ENCODE measurements at regions of chr19 and their contacts with region 1.

Region 1: GRCh38 chr19:41363753-41364523 is at the start of gene B9D2:
- DNase-seq: peak; percentile 96
- ATAC-seq: peak; percentile 95
- H3K4me3 ChIP-seq: peak within 1 kb of the TSS; percentile 70 to 87 (median 84)
- H3K27ac ChIP-seq: peak within 1 kb of the TSS; percentile 95
- H3K4me1 ChIP-seq: peaks cover 50% of the 10 kb centered on the region
- H3K27me3 ChIP-seq: no peaks in the 10 kb centered on the region; a peak in 2 of 5 replicates
- CTCF ChIP-seq: no peak
- EP300 ChIP-seq: peak in 1 of 2 experiments; percentile 42; a peak in 1 of 4 replicates
- POLR2A ChIP-seq: peak; percentile 65 to 91; a peak in 3 of 4 replicates
- RAD21 ChIP-seq: no peak
- total RNA-seq, gene B9D2: 4.4 and 5.3 TPM in 2 replicates

Region 2: GRCh38 chr19:41226053-41226873 is 137.7 kb before region 1 on chr19:
- CTCF ChIA-PET with region 1: no interaction called
- POLR2A ChIA-PET with region 1: interaction called, 10 read pairs
- in situ Hi-C with region 1: no loop called
- intact Hi-C with region 1: no loop called
- DNase-seq: peak; percentile 68
- ATAC-seq: peak; percentile 78
- H3K4me3 ChIP-seq: peak overlapping the region; percentile 63 to 80 (median 73)
- H3K27ac ChIP-seq: peak overlapping the region; percentile 77
- H3K4me1 ChIP-seq: peaks cover 69% of the 10 kb centered on the region
- H3K27me3 ChIP-seq: no peaks in the 10 kb centered on the region; a peak in 1 of 5 replicates
- CTCF ChIP-seq: no peak
- EP300 ChIP-seq: no peak; a peak in 1 of 4 replicates
- POLR2A ChIP-seq: peak; percentile 46 to 77; a peak in 3 of 4 replicates
- RAD21 ChIP-seq: no peak; the same call in none of the 2 replicates

Region 3: DNA sequence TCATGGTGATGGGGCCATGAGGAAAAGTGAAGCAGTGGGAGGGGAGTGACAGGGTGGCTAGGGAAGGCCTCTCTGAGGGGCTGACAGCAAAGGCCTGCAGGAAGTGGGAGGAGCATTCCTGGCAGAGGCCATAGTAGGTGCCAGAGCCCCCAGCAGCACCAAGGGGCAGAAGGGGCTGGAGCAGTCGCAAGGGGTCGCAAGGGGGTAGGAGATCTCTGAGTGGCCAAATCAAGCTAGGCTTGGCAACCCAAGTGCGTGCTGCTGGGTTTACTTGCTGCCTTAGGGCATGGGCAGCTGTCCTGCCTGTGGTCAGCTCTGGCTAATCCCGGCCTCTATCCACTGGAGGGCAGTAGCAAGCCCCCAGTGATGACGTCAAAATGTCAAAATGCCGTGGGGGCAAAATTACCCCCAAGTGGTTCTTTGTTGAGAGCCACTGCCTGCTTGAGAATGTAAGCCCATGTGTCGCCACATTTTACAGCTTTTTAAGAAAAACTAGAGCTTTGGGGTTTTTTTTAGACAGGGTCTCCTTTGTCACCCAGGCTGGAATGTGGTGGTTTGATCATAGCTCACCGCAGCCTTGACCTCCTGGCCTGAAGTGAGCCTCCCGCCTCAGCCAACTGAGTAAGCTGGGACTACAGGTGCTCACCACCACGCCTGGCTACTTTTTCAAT is 42.2 kb before region 1 on chr19:
- CTCF ChIA-PET with region 1: no interaction called
- POLR2A ChIA-PET with region 1: interaction called, 24 read pairs
- in situ Hi-C with region 1: no loop called
- intact Hi-C with region 1: no loop called
- DNase-seq: peak; percentile 82
- ATAC-seq: peak; percentile 33
- H3K4me3 ChIP-seq: no peak overlapping the region
- H3K27ac ChIP-seq: peak overlapping the region; percentile 74
- H3K4me1 ChIP-seq: peaks cover 71% of the 10 kb centered on the region
- H3K27me3 ChIP-seq: no peaks in the 10 kb centered on the region
- CTCF ChIP-seq: peak; percentile 80
- EP300 ChIP-seq: peak; percentile 56 to 63; a peak in 3 of 4 replicates
- POLR2A ChIP-seq: no peak
- RAD21 ChIP-seq: peak; percentile 63; the same call in 1 of the 2 replicates

Region 4: GRCh38 chr19:41341669-41342490 is 22.1 kb before region 1 on chr19:
- CTCF ChIA-PET with region 1: no interaction called
- POLR2A ChIA-PET with region 1: no interaction called
- in situ Hi-C with region 1: no loop called
- intact Hi-C with region 1: no loop called
- DNase-seq: no peak
- ATAC-seq: no peak; the same call in 1 of the 3 replicates
- H3K4me3 ChIP-seq: no peak overlapping the region
- H3K27ac ChIP-seq: no peak overlapping the region
- H3K4me1 ChIP-seq: no peaks in the 10 kb centered on the region
- H3K27me3 ChIP-seq: no peaks in the 10 kb centered on the region
- CTCF ChIP-seq: peak; percentile 41
- EP300 ChIP-seq: no peak
- POLR2A ChIP-seq: no peak
- RAD21 ChIP-seq: no peak

Region 5: GRCh38 chr19:41376241-41376997 is 12.5 kb after region 1 on chr19 and contains the start of gene TMEM91:
- CTCF ChIA-PET with region 1: no interaction called
- POLR2A ChIA-PET with region 1: interaction called, 11 read pairs
- in situ Hi-C with region 1: no loop called
- intact Hi-C with region 1: no loop called
- DNase-seq: no peak
- ATAC-seq: peak; percentile 78
- H3K4me3 ChIP-seq: peak within 1 kb of the TSS; percentile 65 to 81 (median 74)
- H3K27ac ChIP-seq: peak within 1 kb of the TSS; percentile 50
- H3K4me1 ChIP-seq: peaks cover 26% of the 10 kb centered on the region
- H3K27me3 ChIP-seq: no peaks in the 10 kb centered on the region
- CTCF ChIP-seq: no peak
- EP300 ChIP-seq: no peak
- POLR2A ChIP-seq: 0 out of 4 replicates have a peak, but pooled peaks of 1 of the 2 experiments have one; percentile 55
- RAD21 ChIP-seq: no peak
- total RNA-seq, gene TMEM91: 6.3 and 8.4 TPM in 2 replicates

Region 6: GRCh38 chr19:41439441-41440222 is 75.7 kb after region 1 on chr19 and contains the start of gene DMAC2:
- CTCF ChIA-PET with region 1: no interaction called
- POLR2A ChIA-PET with region 1: interaction called, 41 read pairs
- in situ Hi-C with region 1: no loop called
- intact Hi-C with region 1: no loop called
- DNase-seq: peak; percentile 98
- ATAC-seq: peak; percentile 94
- H3K4me3 ChIP-seq: peak within 1 kb of the TSS; percentile 71 to 94 (median 77)
- H3K27ac ChIP-seq: peak within 1 kb of the TSS; percentile 95
- H3K4me1 ChIP-seq: peaks cover 45% of the 10 kb centered on the region
- H3K27me3 ChIP-seq: no peaks in the 10 kb centered on the region
- CTCF ChIP-seq: peak; percentile 83
- EP300 ChIP-seq: no peak
- POLR2A ChIP-seq: peak; percentile 84 to 91
- RAD21 ChIP-seq: peak; percentile 28; the same call in 1 of the 2 replicates
- total RNA-seq, gene DMAC2: 39.0 and 51.9 TPM in 2 replicates

Measured in HepG2 (cell line).